Activated CD4-positive, alpha-beta T cell treated with anti-CD3 and anti-CD28 coated beads for 36 hours (primary cell): ENCODE measurements at regions of chr14 and their contacts with region 1.

Region 1: GRCh38 chr14:75307700-75308379 is 29.2 kb downstream of the FOS start:
- DNase-seq: peak; percentile 89
- ATAC-seq: peak; percentile 73
- H3K4me3 Mint-ChIP-seq: no peak overlapping the region
- H3K27ac Mint-ChIP-seq: no peak overlapping the region
- H3K4me1 Mint-ChIP-seq: peaks cover 14% of the 10 kb centered on the region
- H3K27me3 Mint-ChIP-seq: no peaks in the 10 kb centered on the region

Region 2: DNA sequence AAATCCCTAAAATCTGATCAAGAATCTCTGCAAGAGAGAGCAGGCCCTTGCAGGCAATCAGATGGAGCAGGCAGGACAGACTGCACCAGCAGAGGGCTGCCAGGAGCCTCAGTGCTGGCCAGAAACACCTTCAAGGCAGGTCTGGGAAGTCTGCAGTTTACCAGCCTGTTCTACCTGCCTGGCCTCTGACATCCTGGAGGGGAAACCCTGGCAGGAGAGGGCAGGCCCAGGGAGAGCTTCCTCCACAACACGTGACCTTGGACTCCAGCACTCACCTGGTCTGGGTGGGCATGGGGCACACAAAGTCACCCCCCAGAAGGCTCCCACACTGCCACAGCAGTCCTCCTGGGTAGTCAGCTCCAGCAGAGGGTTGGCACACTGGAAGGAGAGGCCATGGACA is 758.3 kb before region 1 on chr14:
- CTCF ChIA-PET with region 1: no interaction called
- POLR2A ChIA-PET with region 1: no interaction called
- intact Hi-C with region 1: no loop called
- DNase-seq: peak; percentile 25
- ATAC-seq: no peak
- H3K4me3 Mint-ChIP-seq: no peak overlapping the region
- H3K27ac Mint-ChIP-seq: no peak overlapping the region
- H3K4me1 Mint-ChIP-seq: peaks cover 2% of the 10 kb centered on the region
- H3K27me3 Mint-ChIP-seq: no peaks in the 10 kb centered on the region

Region 3: GRCh38 chr14:75002392-75003249 is 305.2 kb before region 1 on chr14 and contains the start of gene EIF2B2:
- CTCF ChIA-PET with region 1: no interaction called
- POLR2A ChIA-PET with region 1: no interaction called
- intact Hi-C with region 1: loop called in 1 of 2 experiments (anchors 5 kb)
- DNase-seq: peak; percentile 99
- ATAC-seq: peak; percentile 97
- H3K4me3 Mint-ChIP-seq: peak within 1 kb of the TSS; percentile 87
- H3K27ac Mint-ChIP-seq: peak within 1 kb of the TSS; percentile 88
- H3K4me1 Mint-ChIP-seq: peaks cover 34% of the 10 kb centered on the region
- H3K27me3 Mint-ChIP-seq: no peaks in the 10 kb centered on the region
- total RNA-seq, gene EIF2B2: 55.6 to 69.8 TPM

Region 4: DNA sequence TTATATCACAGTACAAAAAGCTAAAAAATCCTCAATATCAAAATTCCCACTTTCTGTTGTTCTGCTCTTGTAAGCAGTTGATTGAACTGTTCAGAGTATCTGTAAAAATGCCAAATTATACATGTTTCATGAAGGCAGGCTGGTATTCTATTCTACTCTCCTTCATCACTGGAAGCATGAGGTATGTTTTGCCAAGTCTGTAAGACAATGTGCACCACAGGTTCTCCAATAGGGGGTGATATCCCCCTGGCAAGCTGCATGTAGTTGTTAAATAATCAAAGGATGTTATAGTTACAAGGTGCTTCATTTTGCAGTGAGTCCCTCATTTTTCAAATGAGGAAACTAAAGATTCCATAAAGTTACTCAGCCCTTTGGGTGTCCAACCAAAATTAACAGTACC is 165.9 kb before region 1 on chr14:
- CTCF ChIA-PET with region 1: interaction called, 221 read pairs
- POLR2A ChIA-PET with region 1: no interaction called
- intact Hi-C with region 1: no loop called
- DNase-seq: peak; percentile 38
- ATAC-seq: peak; percentile 71
- H3K4me3 Mint-ChIP-seq: no peak overlapping the region
- H3K27ac Mint-ChIP-seq: no peak overlapping the region
- H3K4me1 Mint-ChIP-seq: peaks cover 58% of the 10 kb centered on the region
- H3K27me3 Mint-ChIP-seq: no peaks in the 10 kb centered on the region

Region 5: DNA sequence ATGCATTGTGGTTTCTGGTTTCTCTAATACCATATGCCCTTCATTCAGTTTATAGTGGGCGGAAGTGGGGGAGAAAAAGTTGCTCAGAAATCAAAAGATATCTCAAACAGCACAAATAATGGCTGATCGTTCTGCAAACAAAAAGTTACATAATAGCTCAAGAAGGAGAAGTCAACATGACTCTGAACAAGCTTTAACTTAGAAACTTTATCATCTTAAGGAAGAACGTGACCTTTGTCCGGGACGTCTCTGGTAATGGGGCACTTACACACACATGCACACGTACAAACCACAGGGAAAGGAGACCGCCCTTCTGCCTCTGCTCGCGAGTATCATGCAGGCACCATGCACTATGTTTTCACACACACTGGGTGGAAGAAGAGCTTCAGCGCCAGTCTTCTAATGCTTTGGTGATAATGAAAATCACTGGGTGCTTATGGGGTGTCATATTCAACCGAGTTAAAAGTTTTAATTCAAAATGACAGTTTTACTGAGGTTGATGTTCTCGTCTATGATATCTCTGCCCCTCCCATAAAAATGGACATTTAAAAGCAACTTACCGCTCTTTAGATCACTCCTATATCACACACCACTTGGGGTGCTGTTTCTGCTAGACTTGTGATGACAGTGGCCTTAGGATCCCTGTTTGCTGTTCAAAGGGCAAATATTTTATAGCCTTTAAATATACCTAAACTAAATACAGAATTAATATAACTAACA is 24.5 kb before region 1 on chr14:
- CTCF ChIA-PET with region 1: no interaction called
- POLR2A ChIA-PET with region 1: no interaction called
- intact Hi-C with region 1: no loop called
- DNase-seq: no peak
- ATAC-seq: no peak
- H3K4me3 Mint-ChIP-seq: no peak overlapping the region
- H3K27ac Mint-ChIP-seq: no peak overlapping the region
- H3K4me1 Mint-ChIP-seq: peaks cover 17% of the 10 kb centered on the region
- H3K27me3 Mint-ChIP-seq: peaks cover 2% of the 10 kb centered on the region

Region 6: GRCh38 chr14:75487155-75487671 is 179.4 kb after region 1 on chr14:
- CTCF ChIA-PET with region 1: interaction called, 19 read pairs
- POLR2A ChIA-PET with region 1: interaction called, 4 read pairs
- intact Hi-C with region 1: loop called (anchors 1 kb)
- DNase-seq: peak; percentile 24
- ATAC-seq: peak; percentile 89
- H3K4me3 Mint-ChIP-seq: no peak overlapping the region
- H3K27ac Mint-ChIP-seq: no peak overlapping the region
- H3K4me1 Mint-ChIP-seq: peaks cover 32% of the 10 kb centered on the region
- H3K27me3 Mint-ChIP-seq: no peaks in the 10 kb centered on the region

Region 7: GRCh38 chr14:75654127-75654732 is 346.4 kb after region 1 on chr14:
- CTCF ChIA-PET with region 1: interaction called, 57 read pairs
- POLR2A ChIA-PET with region 1: interaction called, 6 read pairs
- intact Hi-C with region 1: loop called (anchors 1 to 5 kb)
- DNase-seq: peak; percentile 91
- ATAC-seq: peak; percentile 94
- H3K4me3 Mint-ChIP-seq: no peak overlapping the region
- H3K27ac Mint-ChIP-seq: no peak overlapping the region
- H3K4me1 Mint-ChIP-seq: peaks cover 11% of the 10 kb centered on the region
- H3K27me3 Mint-ChIP-seq: no peaks in the 10 kb centered on the region